Heart left ventricle (tissue), 16 donors: ENCODE measurements at regions of chr14 and their contacts with region 1.

Region 1: DNA sequence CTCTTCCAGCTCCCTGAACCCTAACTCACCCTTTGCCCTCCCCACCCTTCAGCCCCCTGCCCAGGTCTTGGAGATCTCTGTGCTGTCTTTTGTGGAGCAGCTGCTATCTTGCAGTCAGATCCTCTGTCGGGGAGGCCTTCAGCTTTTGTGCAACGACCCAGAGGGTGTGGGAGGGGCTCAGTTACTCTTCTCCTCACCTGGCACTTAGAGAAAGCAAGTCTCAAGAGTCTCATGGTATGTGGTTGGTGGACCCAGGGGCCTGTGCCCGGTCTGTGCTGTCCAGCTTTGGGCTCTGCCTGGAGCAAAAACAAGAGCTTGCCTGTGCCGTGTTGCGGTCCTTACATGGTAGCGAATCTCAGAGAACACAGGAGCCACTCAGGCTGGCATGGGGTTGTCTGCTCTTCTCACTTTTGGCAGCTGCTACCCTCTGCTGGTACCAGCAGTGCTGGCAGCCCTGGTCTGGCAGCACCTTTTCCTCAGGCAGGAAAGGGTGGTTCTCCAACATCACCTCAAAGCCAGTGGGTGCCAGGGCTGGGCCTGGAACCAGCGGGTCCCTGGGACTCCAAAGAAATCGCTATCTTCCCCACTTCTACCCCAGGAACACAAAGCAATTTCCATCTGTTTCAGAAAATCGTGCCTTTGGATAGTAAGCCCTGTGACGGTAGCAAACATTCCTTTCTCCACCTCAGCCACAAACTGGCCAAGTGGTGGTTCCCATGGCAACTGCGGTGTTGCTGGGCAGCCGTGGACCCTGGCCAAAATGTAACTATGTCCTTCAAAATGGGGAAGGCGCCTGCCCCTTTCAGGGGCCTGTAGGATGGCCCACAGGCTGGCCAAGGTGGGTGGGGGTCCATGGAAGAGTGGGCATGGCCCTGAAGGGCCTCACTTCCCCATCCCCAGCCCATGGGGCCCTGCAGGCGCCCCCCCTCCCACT is 90.0 kb downstream of the RIN3 start:
- DNase-seq: peak in 4 of 5 donors; percentile 50 to 74 (median 64)
- ATAC-seq: peak; percentile 88 to 93 (median 90)
- H3K4me3 ChIP-seq: no peak overlapping the region
- H3K27ac ChIP-seq: peak overlapping the region in 7 of 12 donors; percentile 8 to 89 (median 45)
- H3K4me1 ChIP-seq: peaks cover 0 to 31% (median 23%) of the 10 kb centered on the region in 12 donors
- H3K27me3 ChIP-seq: no peaks in the 10 kb centered on the region
- CTCF ChIP-seq: peak in 11 of 12 donors; percentile 21 to 59 (median 39)
- POLR2A ChIP-seq: no peak

Region 2: DNA sequence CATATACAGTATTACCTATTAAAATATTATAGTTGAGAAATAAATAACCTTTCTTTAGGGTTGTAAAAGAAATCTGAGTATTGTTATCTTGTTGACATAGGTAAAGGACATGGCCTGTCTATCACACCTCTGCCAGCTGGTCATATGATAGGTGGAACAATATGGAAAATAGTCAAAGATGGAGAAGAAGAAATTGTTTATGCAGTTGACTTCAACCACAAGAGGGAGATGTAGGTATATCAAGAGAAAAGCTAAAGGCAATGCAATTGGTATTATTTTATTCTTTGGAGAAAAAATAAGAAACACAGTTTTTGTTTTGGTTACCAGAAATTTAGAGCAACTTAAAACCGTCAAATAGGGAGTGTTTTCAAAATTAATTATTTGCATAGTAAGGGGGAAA is 468.3 kb before region 1 on chr14:
- intact Hi-C with region 1: loop called in 2 of 10 experiments (anchors 10 kb)
- DNase-seq: no peak
- ATAC-seq: no peak
- H3K4me3 ChIP-seq: no peak overlapping the region
- H3K27ac ChIP-seq: no peak overlapping the region
- H3K4me1 ChIP-seq: peaks cover 0 to 3% (median 0%) of the 10 kb centered on the region in 12 donors
- H3K27me3 ChIP-seq: no peaks in the 10 kb centered on the region
- CTCF ChIP-seq: peak; percentile 26 to 60 (median 46)
- POLR2A ChIP-seq: no peak

Region 3: DNA sequence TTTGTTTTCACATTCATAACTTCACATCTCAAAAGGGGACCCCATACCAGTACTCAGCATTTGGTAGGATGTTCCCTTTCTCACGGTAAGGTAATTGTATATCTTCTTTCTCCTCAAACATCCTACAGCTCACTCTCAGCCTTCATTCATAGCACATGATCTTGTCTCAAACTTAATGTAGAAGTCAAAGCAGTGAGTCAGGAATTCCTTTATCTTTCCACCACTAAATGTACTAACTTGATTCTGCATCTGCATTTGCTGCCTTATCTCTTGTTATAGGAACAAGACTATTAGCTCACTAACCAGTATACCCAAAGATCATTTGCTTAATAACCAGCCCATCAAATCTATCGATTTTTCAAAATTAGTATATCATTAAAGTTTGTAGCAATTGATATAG is 458.9 kb before region 1 on chr14:
- intact Hi-C with region 1: loop called in 2 of 10 experiments (anchors 10 kb)
- DNase-seq: no peak
- ATAC-seq: no peak
- H3K4me3 ChIP-seq: no peak overlapping the region
- H3K27ac ChIP-seq: no peak overlapping the region
- H3K4me1 ChIP-seq: no peaks in the 10 kb centered on the region
- H3K27me3 ChIP-seq: no peaks in the 10 kb centered on the region
- CTCF ChIP-seq: no peak
- POLR2A ChIP-seq: no peak